HEK293 (cell line): ENCODE measurements at regions of chrX and their contacts with region 1.

Region 1: DNA sequence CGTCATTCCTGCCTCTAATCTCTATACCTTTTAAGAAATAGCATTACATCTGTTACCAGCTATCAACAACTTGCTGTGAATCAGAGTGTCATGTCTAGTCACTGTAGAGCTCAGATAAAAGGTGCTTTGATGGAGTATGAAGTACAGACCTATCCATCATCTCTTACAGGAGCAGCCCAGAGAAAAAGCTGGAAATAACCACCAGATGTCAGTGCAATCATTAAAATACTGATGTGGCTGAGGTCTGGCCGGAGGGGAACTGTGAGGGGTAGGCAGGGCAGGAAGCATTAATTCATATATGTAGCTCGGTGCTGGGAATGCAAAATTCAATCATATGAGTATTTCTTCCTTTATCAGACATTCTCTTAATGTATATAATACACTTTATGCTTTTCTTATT is 100.6 kb downstream of the AKAP4 start:
- H3K4me3 ChIP-seq: no peak overlapping the region
- H3K27ac ChIP-seq: no peak overlapping the region
- H3K4me1 ChIP-seq: no peaks in the 10 kb centered on the region
- CTCF ChIP-seq: no peak

Region 2: DNA sequence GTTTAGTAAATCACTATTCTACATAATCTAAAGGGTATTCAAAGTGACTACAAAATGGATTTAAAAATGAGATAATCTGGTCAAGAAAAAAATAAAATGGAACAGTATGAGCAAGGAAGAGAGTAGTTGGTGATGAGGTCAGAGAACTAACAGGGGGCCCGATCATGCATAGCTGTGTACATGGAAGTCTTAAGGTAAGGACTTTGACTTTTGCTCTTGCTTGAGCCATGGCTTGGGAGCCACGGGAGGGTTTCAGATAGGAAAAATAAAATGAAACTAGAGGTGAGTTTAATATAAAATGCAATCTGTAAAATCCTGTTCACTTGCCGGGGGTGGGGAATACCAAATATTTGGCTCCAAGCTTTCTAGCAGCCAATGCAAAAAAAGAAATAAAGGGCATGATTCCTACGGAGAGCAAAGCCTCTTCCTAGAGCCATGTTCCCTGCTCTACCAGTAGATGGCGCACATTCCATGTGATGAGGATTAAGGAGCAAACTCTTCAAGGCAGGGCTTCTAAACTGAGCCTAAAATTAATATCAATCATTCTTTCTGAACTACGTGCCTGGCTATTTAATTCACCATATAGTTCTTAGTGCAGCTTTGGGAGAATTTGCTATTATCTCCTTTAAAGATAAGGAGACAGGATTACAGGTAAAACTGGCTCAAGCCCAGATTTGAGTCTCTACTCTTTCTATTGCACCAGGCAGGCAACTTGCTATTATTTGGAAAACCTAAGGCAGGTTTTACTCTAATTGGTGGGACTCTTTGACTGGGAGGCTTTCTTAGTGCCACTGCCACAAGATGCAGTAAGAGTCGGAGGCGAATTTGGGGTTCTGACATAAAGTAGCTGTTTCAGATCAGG is 184.6 kb before region 1 on chrX:
- CTCF ChIA-PET with region 1: interaction called, 17 read pairs
- POLR2A ChIA-PET with region 1: no interaction called
- H3K4me3 ChIP-seq: no peak overlapping the region
- H3K27ac ChIP-seq: no peak overlapping the region
- H3K4me1 ChIP-seq: no peaks in the 10 kb centered on the region
- CTCF ChIP-seq: peak; percentile 25; the same call in 1 of the 2 replicates

Region 3: GRCh38 chrX:50204364-50204899 is 104.2 kb after region 1 on chrX and contains the start of gene CCNB3:
- CTCF ChIA-PET with region 1: interaction called, 36 read pairs
- POLR2A ChIA-PET with region 1: no interaction called
- H3K4me3 ChIP-seq: peak within 1 kb of the TSS; percentile 25
- H3K27ac ChIP-seq: no peak within 1 kb of the TSS
- H3K4me1 ChIP-seq: no peaks in the 10 kb centered on the region
- CTCF ChIP-seq: peak; percentile 43; the same call in 1 of the 2 replicates

Region 4: GRCh38 chrX:50579955-50580354 is 479.8 kb after region 1 on chrX:
- CTCF ChIA-PET with region 1: interaction called, 23 read pairs
- POLR2A ChIA-PET with region 1: no interaction called
- H3K4me3 ChIP-seq: no peak overlapping the region
- H3K27ac ChIP-seq: no peak overlapping the region
- H3K4me1 ChIP-seq: no peaks in the 10 kb centered on the region
- CTCF ChIP-seq: 0 out of 2 replicates have a peak, but pooled peaks have one; percentile 7

Region 5: GRCh38 chrX:50680990-50681389 is 580.8 kb after region 1 on chrX:
- CTCF ChIA-PET with region 1: interaction called, 10 read pairs
- POLR2A ChIA-PET with region 1: no interaction called
- H3K4me3 ChIP-seq: no peak overlapping the region
- H3K27ac ChIP-seq: no peak overlapping the region
- H3K4me1 ChIP-seq: no peaks in the 10 kb centered on the region
- CTCF ChIP-seq: no peak